A549 (cell line): ENCODE measurements at regions of chr1 and their contacts with region 1.

Region 1: GRCh38 chr1:209860293-209860881 is 32.6 kb downstream of the UTP25 start:
- DNase-seq: peak; percentile 81 to 86
- ATAC-seq: peak; percentile 85 to 95
- H3K4me3 ChIP-seq: no peak overlapping the region
- H3K27ac ChIP-seq: no peak overlapping the region
- H3K4me1 ChIP-seq: peaks cover 5% of the 10 kb centered on the region; the same call in 1 of the 3 replicates
- CTCF ChIP-seq: peak; percentile 90
- EP300 ChIP-seq: no peak
- POLR2A ChIP-seq: no peak
- RAD21 ChIP-seq: peak; percentile 74 to 79

Region 2: DNA sequence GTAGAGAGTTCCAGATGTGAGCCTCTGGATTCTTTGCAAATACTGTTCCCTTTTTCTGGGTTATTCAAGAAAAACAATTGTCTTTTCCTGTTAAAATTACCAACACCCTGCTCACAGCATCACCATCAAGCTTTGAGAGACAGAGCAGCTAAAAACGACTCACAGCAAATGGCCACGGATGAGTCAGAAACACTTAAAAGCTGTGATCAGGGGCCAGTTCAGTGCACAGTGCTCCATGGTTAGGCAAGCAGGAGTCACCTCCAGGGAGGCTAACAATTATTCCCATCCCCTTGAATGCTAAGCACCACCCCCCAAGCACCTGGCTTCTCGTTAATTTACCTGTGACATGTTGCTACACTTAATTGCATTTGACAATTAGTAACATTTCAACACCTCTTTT is 405.2 kb before region 1 on chr1:
- CTCF ChIA-PET with region 1: no interaction called
- POLR2A ChIA-PET with region 1: no interaction called
- DNase-seq: no peak
- ATAC-seq: no peak
- H3K4me3 ChIP-seq: no peak overlapping the region
- H3K27ac ChIP-seq: no peak overlapping the region
- H3K4me1 ChIP-seq: no peaks in the 10 kb centered on the region
- CTCF ChIP-seq: no peak
- EP300 ChIP-seq: no peak
- POLR2A ChIP-seq: no peak
- RAD21 ChIP-seq: no peak

Region 3: GRCh38 chr1:209839875-209840491 is 20.4 kb before region 1 on chr1:
- CTCF ChIA-PET with region 1: interaction called, 90 read pairs
- POLR2A ChIA-PET with region 1: interaction called, 3 read pairs
- DNase-seq: peak; percentile 77 to 87
- ATAC-seq: peak; percentile 97
- H3K4me3 ChIP-seq: no peak overlapping the region
- H3K27ac ChIP-seq: peak overlapping the region; percentile 76 to 81
- H3K4me1 ChIP-seq: peaks cover 24% of the 10 kb centered on the region
- CTCF ChIP-seq: no peak
- EP300 ChIP-seq: no peak
- POLR2A ChIP-seq: no peak
- RAD21 ChIP-seq: no peak

Region 4: DNA sequence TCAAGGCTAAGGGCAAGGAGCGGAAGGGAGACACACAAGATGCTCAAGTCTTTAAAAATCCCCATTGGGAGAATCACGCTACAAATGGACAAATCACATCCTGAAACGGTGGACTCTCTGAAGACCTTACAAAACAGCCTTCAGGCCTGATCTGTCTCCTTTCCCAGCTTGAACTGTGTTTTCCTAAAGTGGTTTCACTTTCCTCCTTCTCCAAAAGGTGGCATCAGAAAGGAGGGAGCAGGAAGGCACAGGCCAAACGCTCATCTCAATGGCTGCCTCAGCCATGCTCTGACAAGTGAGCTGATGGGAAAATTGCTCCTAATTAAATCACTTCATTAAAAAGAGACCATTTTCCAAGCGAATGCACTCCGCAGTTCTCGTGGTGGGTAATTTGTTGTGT is 15.1 kb after region 1 on chr1:
- CTCF ChIA-PET with region 1: interaction called, 42 read pairs
- POLR2A ChIA-PET with region 1: no interaction called
- DNase-seq: peak; percentile 33 to 52
- ATAC-seq: peak; percentile 87 to 95
- H3K4me3 ChIP-seq: no peak overlapping the region
- H3K27ac ChIP-seq: no peak overlapping the region
- H3K4me1 ChIP-seq: 0 out of 3 replicates have a peak, but pooled peaks cover 2% of the 10 kb centered on the region
- CTCF ChIP-seq: peak; percentile 44
- EP300 ChIP-seq: no peak
- POLR2A ChIP-seq: no peak
- RAD21 ChIP-seq: peak; percentile 34 to 42; a peak in 4 of 5 replicates

Region 5: GRCh38 chr1:209883341-209883971 is 23.1 kb after region 1 on chr1:
- CTCF ChIA-PET with region 1: interaction called, 15 read pairs
- POLR2A ChIA-PET with region 1: no interaction called
- DNase-seq: no peak
- ATAC-seq: no peak; a peak in 1 of 6 replicates
- H3K4me3 ChIP-seq: no peak overlapping the region
- H3K27ac ChIP-seq: peak overlapping the region in 1 of 2 experiments; percentile 36; a peak in 3 of 6 replicates
- H3K4me1 ChIP-seq: peaks cover 19% of the 10 kb centered on the region
- CTCF ChIP-seq: no peak
- EP300 ChIP-seq: no peak
- POLR2A ChIP-seq: no peak
- RAD21 ChIP-seq: no peak

Region 6: GRCh38 chr1:209895709-209896108 is 35.3 kb after region 1 on chr1:
- CTCF ChIA-PET with region 1: interaction called, 10 read pairs
- POLR2A ChIA-PET with region 1: no interaction called
- DNase-seq: no peak
- ATAC-seq: peak in 1 of 2 experiments; percentile 20; a peak in 1 of 6 replicates
- H3K4me3 ChIP-seq: no peak overlapping the region
- H3K27ac ChIP-seq: no peak overlapping the region
- H3K4me1 ChIP-seq: peaks cover 4% of the 10 kb centered on the region; the same call in 1 of the 3 replicates
- CTCF ChIP-seq: no peak
- EP300 ChIP-seq: no peak
- POLR2A ChIP-seq: no peak
- RAD21 ChIP-seq: no peak

Region 7: DNA sequence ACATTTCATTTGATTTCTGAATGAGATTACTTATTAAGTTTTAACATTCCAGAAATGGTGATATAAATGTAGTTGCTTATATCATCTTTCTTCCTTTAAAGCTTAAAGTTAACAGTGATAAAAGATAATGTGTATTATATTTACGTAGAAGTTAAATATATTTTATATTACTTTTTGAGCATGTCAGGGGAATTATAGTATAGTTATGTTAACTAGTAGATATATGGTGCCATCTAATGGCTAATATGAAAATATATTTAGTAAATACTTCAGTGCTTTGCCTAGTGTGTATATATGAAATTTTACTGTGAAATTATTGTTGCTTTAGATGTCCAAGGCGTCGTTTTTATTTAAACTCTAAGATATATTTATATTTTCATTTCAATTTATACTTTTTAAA is 129.1 kb after region 1 on chr1:
- CTCF ChIA-PET with region 1: interaction called, 235 read pairs
- POLR2A ChIA-PET with region 1: no interaction called
- DNase-seq: peak; percentile 4 to 9
- ATAC-seq: peak in 1 of 2 experiments; percentile 78; a peak in 3 of 6 replicates
- H3K4me3 ChIP-seq: no peak overlapping the region
- H3K27ac ChIP-seq: no peak overlapping the region
- H3K4me1 ChIP-seq: no peaks in the 10 kb centered on the region
- CTCF ChIP-seq: peak; percentile 32; the same call in 2 of the 3 replicates
- EP300 ChIP-seq: no peak
- POLR2A ChIP-seq: no peak
- RAD21 ChIP-seq: peak; percentile 53 to 78